ENCODE measurements at regions of chrX and their contacts with region 1.

Region 1: GRCh38 chrX:152958524-152959465 is 35.1 kb downstream of the PNMA5 start:
- DNase-seq: peak; percentile 82 to 97 (median 90)
- ATAC-seq: peak; percentile 97
- H3K4me3 ChIP-seq: peak overlapping the region; percentile 29 to 34
- H3K4me3 Mint-ChIP-seq: peak overlapping the region; percentile 71
- H3K27ac ChIP-seq: peak overlapping the region; percentile 48 to 73
- H3K27ac Mint-ChIP-seq: peak overlapping the region; percentile 89
- H3K4me1 ChIP-seq: peaks cover 6% of the 10 kb centered on the region
- H3K4me1 Mint-ChIP-seq: peaks cover 5% of the 10 kb centered on the region
- H3K27me3 ChIP-seq: no peaks in the 10 kb centered on the region
- H3K27me3 Mint-ChIP-seq: no peaks in the 10 kb centered on the region
- CTCF ChIP-seq: peak; percentile 66

Region 2: DNA sequence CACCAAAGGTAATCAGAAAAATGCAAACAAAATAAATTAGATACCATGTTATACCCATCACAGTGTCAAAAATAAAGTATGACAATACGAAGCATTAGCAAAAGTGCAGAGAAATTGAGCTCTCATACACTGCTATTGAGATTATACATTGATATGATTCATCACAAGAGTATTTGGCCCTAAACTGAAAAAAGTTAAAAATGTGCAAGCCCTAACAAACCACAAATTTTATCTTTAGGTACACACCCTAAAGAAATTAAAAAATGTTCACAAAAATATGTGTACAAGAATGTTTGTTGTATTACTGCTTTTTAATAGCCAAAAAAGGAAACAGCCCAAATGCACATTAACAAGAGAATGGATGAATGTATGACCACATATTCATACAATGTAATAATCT is 682.5 kb before region 1 on chrX:
- CTCF ChIA-PET with region 1: no interaction called
- POLR2A ChIA-PET with region 1: no interaction called
- intact Hi-C with region 1: no loop called
- DNase-seq: no peak
- ATAC-seq: no peak
- H3K4me3 ChIP-seq: no peak overlapping the region
- H3K4me3 Mint-ChIP-seq: no peak overlapping the region
- H3K27ac ChIP-seq: no peak overlapping the region
- H3K27ac Mint-ChIP-seq: no peak overlapping the region
- H3K4me1 ChIP-seq: no peaks in the 10 kb centered on the region
- H3K4me1 Mint-ChIP-seq: no peaks in the 10 kb centered on the region
- H3K27me3 ChIP-seq: no peaks in the 10 kb centered on the region
- H3K27me3 Mint-ChIP-seq: no peaks in the 10 kb centered on the region
- CTCF ChIP-seq: no peak

Region 3: DNA sequence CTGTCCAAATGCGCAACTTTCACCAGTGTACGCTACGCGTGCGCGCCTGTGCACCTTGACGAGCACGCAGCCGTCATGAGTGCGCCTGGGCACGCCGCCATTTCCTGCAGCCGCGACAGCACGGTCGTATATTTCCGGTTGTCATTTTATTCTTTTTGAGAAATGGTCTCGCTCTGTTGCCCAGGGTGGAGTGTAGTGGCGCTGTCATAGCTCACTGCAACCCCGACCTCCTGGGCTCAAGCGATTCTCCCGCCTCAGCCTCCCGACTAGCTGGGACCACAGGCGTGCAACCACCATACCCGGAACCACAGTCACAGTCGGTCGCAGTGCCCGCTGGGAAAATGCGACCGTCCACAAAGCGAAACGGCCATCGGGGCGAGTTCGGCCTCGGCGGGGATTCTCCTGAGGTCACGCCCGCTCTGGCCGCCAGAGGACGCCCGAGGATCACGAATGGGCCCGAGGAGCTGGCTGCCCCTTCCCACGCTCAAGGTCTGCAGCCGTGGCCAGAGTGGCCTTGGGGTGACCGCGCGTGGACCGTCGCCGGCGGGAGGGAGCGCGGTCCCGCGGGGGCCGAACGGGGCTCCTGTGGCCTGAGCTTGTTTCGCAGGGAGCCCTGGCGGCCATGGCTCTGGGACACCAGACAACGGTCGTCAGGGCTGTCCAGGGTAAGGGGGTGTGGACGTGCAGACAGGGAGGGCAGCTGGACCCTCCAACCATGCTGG is 73.8 kb after region 1 on chrX:
- CTCF ChIA-PET with region 1: no interaction called
- POLR2A ChIA-PET with region 1: no interaction called
- intact Hi-C with region 1: loop called in 1 of 2 experiments (anchors 1 kb)
- DNase-seq: peak; percentile 33 to 80 (median 64)
- ATAC-seq: peak; percentile 73
- H3K4me3 ChIP-seq: peak overlapping the region; percentile 50 to 52
- H3K4me3 Mint-ChIP-seq: peak overlapping the region; percentile 86
- H3K27ac ChIP-seq: peak overlapping the region; percentile 42 to 51
- H3K27ac Mint-ChIP-seq: peak overlapping the region; percentile 91
- H3K4me1 ChIP-seq: peaks cover 10% of the 10 kb centered on the region
- H3K4me1 Mint-ChIP-seq: peaks cover 17% of the 10 kb centered on the region
- H3K27me3 ChIP-seq: no peaks in the 10 kb centered on the region
- H3K27me3 Mint-ChIP-seq: no peaks in the 10 kb centered on the region
- CTCF ChIP-seq: peak; percentile 66